ENCODE measurements at regions of chr4 and their contacts with region 1.

Region 1: GRCh38 chr4:151362404-151363164 is 37.2 kb upstream of the SH3D19 start:
- DNase-seq: peak; percentile 54 to 82 (median 72)
- ATAC-seq: peak; percentile 100
- H3K4me3 ChIP-seq: no peak overlapping the region
- H3K4me3 Mint-ChIP-seq: no peak overlapping the region
- H3K27ac ChIP-seq: no peak overlapping the region
- H3K27ac Mint-ChIP-seq: no peak overlapping the region
- H3K4me1 ChIP-seq: no peaks in the 10 kb centered on the region
- H3K4me1 Mint-ChIP-seq: peaks cover 0 to 5% (median 3%) of the 10 kb centered on the region in 7 donors
- H3K27me3 ChIP-seq: no peaks in the 10 kb centered on the region
- H3K27me3 Mint-ChIP-seq: peaks cover 0 to 21% (median 15%) of the 10 kb centered on the region in 5 donors

Region 2: DNA sequence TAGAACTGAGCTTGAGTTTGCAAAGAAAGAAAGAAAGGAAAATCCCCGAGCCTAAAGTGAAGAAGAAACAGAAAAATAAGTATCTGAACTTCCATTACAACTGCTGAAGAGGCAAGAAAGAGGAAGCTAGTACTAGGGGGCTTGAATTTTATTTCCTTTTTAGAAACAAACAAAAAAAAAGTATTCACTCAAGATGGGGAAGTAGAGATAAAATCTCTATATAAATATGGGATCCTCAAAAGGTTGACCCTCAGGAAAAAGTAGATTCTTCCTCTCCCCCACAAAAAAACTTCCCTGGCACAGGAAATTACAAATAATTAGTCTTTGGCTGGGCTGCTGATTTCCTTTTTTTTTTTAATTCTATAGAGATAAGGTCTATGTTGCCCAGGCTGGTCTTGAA is 363.5 kb before region 1 on chr4:
- CTCF ChIA-PET with region 1: no interaction called
- POLR2A ChIA-PET with region 1: no interaction called
- intact Hi-C with region 1: no loop called
- DNase-seq: no peak
- ATAC-seq: no peak
- H3K4me3 ChIP-seq: no peak overlapping the region
- H3K4me3 Mint-ChIP-seq: peak overlapping the region in 2 of 10 donors; percentile 4 to 28
- H3K27ac ChIP-seq: no peak overlapping the region
- H3K27ac Mint-ChIP-seq: peak overlapping the region in 1 of 9 donors; percentile 16
- H3K4me1 ChIP-seq: no peaks in the 10 kb centered on the region
- H3K4me1 Mint-ChIP-seq: peaks cover 17 to 90% (median 77%) of the 10 kb centered on the region in 7 donors
- H3K27me3 ChIP-seq: no peaks in the 10 kb centered on the region
- H3K27me3 Mint-ChIP-seq: no peaks in the 10 kb centered on the region

Region 3: GRCh38 chr4:151276787-151277562 is 85.6 kb before region 1 on chr4 and contains the start of gene PRSS48:
- CTCF ChIA-PET with region 1: no interaction called
- POLR2A ChIA-PET with region 1: no interaction called
- intact Hi-C with region 1: loop called in 1 of 2 experiments (anchors 5 kb)
- DNase-seq: peak in 7 of 9 donors; percentile 1 to 53 (median 8)
- ATAC-seq: no peak
- H3K4me3 ChIP-seq: no peak within 1 kb of the TSS
- H3K4me3 Mint-ChIP-seq: no peak within 1 kb of the TSS
- H3K27ac ChIP-seq: no peak within 1 kb of the TSS
- H3K27ac Mint-ChIP-seq: no peak within 1 kb of the TSS
- H3K4me1 ChIP-seq: no peaks in the 10 kb centered on the region
- H3K4me1 Mint-ChIP-seq: no peaks in the 10 kb centered on the region
- H3K27me3 ChIP-seq: no peaks in the 10 kb centered on the region
- H3K27me3 Mint-ChIP-seq: peaks cover 0 to 24% (median 12%) of the 10 kb centered on the region in 5 donors
- total RNA-seq, gene PRSS48: not detected

Region 4: GRCh38 chr4:151604238-151604637 is 241.7 kb after region 1 on chr4:
- CTCF ChIA-PET with region 1: no interaction called
- POLR2A ChIA-PET with region 1: no interaction called
- intact Hi-C with region 1: loop called in 1 of 2 experiments (anchors 2 kb)
- DNase-seq: no peak
- ATAC-seq: no peak
- H3K4me3 ChIP-seq: no peak overlapping the region
- H3K4me3 Mint-ChIP-seq: no peak overlapping the region
- H3K27ac ChIP-seq: no peak overlapping the region
- H3K27ac Mint-ChIP-seq: no peak overlapping the region
- H3K4me1 ChIP-seq: no peaks in the 10 kb centered on the region
- H3K4me1 Mint-ChIP-seq: peaks cover 0 to 4% (median 0%) of the 10 kb centered on the region in 7 donors
- H3K27me3 ChIP-seq: no peaks in the 10 kb centered on the region
- H3K27me3 Mint-ChIP-seq: peaks cover 0 to 1% (median 0%) of the 10 kb centered on the region in 5 donors

Region 5: GRCh38 chr4:151760712-151761527 is 398.3 kb after region 1 on chr4 and contains the start of gene GATB:
- CTCF ChIA-PET with region 1: no interaction called
- POLR2A ChIA-PET with region 1: no interaction called
- intact Hi-C with region 1: loop called (anchors 1 kb)
- DNase-seq: peak; percentile 67 to 97 (median 93)
- ATAC-seq: peak; percentile 99
- H3K4me3 ChIP-seq: peak within 1 kb of the TSS; percentile 87
- H3K4me3 Mint-ChIP-seq: peak within 1 kb of the TSS; percentile 88 to 99 (median 98)
- H3K27ac ChIP-seq: peak within 1 kb of the TSS; percentile 69
- H3K27ac Mint-ChIP-seq: peak within 1 kb of the TSS; percentile 94 to 99 (median 98)
- H3K4me1 ChIP-seq: peaks cover 9 to 13% of the 10 kb centered on the region in 2 donors
- H3K4me1 Mint-ChIP-seq: peaks cover 7 to 24% (median 18%) of the 10 kb centered on the region in 7 donors
- H3K27me3 ChIP-seq: no peaks in the 10 kb centered on the region
- H3K27me3 Mint-ChIP-seq: peaks cover 0 to 8% (median 4%) of the 10 kb centered on the region in 5 donors
- total RNA-seq, gene GATB: 10.5 to 17.3 (median 14.2) TPM

Region 6: GRCh38 chr4:152385551-152385950 is 1023.0 kb after region 1 on chr4:
- CTCF ChIA-PET with region 1: interaction called, 3 read pairs
- POLR2A ChIA-PET with region 1: interaction called, 4 read pairs
- intact Hi-C with region 1: loop called in 1 of 2 experiments (anchors 1 kb)
- DNase-seq: peak in 3 of 9 donors; percentile 12 to 23 (median 15)
- ATAC-seq: no peak
- H3K4me3 ChIP-seq: no peak overlapping the region
- H3K4me3 Mint-ChIP-seq: no peak overlapping the region
- H3K27ac ChIP-seq: no peak overlapping the region
- H3K27ac Mint-ChIP-seq: peak overlapping the region in 2 of 9 donors; percentile 38 to 68
- H3K4me1 ChIP-seq: peaks cover 0 to 14% of the 10 kb centered on the region in 2 donors
- H3K4me1 Mint-ChIP-seq: peaks cover 11 to 40% (median 29%) of the 10 kb centered on the region in 7 donors
- H3K27me3 ChIP-seq: no peaks in the 10 kb centered on the region
- H3K27me3 Mint-ChIP-seq: no peaks in the 10 kb centered on the region

Region 7: DNA sequence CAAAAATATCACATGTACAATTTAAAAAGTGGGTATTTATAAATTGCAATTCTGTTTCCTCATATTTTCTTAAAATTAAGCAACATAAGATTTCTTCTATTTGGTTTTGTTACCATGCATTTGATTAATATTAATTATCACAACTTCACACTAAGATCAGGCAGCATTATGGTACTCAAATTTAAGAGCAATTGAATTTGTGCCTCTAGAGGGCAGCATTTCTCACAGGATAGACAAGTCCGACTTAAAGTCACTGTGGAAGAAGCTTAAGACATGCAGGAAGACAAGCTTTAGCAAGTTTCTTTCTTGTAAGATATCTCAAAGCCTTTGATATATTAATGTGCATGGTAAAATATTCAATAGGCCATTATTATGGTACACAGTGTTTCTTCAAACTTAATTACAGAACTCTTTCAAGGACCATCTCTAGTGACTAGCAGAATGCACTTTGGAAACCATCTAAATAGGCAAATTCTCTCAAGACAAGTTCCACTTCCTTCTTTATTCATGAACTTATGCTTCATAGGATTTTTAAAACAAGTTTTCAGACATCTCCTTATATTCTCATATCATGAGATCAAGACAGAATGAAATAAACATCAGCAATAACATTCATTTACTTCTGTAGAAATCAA is 1138.3 kb after region 1 on chr4:
- CTCF ChIA-PET with region 1: no interaction called
- POLR2A ChIA-PET with region 1: no interaction called
- intact Hi-C with region 1: loop called in 1 of 2 experiments (anchors 1 kb)
- DNase-seq: peak in 7 of 9 donors; percentile 70 to 85 (median 79)
- ATAC-seq: peak; percentile 90
- H3K4me3 ChIP-seq: no peak overlapping the region
- H3K4me3 Mint-ChIP-seq: no peak overlapping the region
- H3K27ac ChIP-seq: no peak overlapping the region
- H3K27ac Mint-ChIP-seq: peak overlapping the region in 4 of 9 donors; percentile 56 to 87 (median 68)
- H3K4me1 ChIP-seq: no peaks in the 10 kb centered on the region
- H3K4me1 Mint-ChIP-seq: peaks cover 20 to 53% (median 41%) of the 10 kb centered on the region in 7 donors
- H3K27me3 ChIP-seq: no peaks in the 10 kb centered on the region
- H3K27me3 Mint-ChIP-seq: no peaks in the 10 kb centered on the region

Region 8: GRCh38 chr4:152735396-152735859 is 1372.8 kb after region 1 on chr4:
- CTCF ChIA-PET with region 1: no interaction called
- POLR2A ChIA-PET with region 1: no interaction called
- intact Hi-C with region 1: loop called in 1 of 2 experiments (anchors 1 kb)
- DNase-seq: peak in 6 of 9 donors; percentile 2 to 33 (median 26)
- ATAC-seq: peak; percentile 49
- H3K4me3 ChIP-seq: no peak overlapping the region
- H3K4me3 Mint-ChIP-seq: no peak overlapping the region
- H3K27ac ChIP-seq: no peak overlapping the region
- H3K27ac Mint-ChIP-seq: no peak overlapping the region
- H3K4me1 ChIP-seq: no peaks in the 10 kb centered on the region
- H3K4me1 Mint-ChIP-seq: peaks cover 0 to 7% (median 0%) of the 10 kb centered on the region in 7 donors
- H3K27me3 ChIP-seq: no peaks in the 10 kb centered on the region
- H3K27me3 Mint-ChIP-seq: peaks cover 0 to 6% (median 4%) of the 10 kb centered on the region in 5 donors

Measured in naive thymus-derived CD4-positive, alpha-beta T cell (primary cell).